T-cell (primary cell): ENCODE measurements at regions of chr3 and their contacts with region 1.

Region 1: GRCh38 chr3:133475245-133476010 is 75.6 kb downstream of the BFSP2 start:
- DNase-seq: no peak
- ATAC-seq: peak; percentile 34 to 66 (median 51)
- H3K4me3 ChIP-seq: no peak overlapping the region
- H3K4me3 Mint-ChIP-seq: peak overlapping the region in 1 of 3 donors; percentile 7
- H3K27ac ChIP-seq: peak overlapping the region; percentile 46
- H3K27ac Mint-ChIP-seq: peak overlapping the region; percentile 58 to 81
- H3K4me1 ChIP-seq: peaks cover 10% of the 10 kb centered on the region in 2 experiments
- H3K4me1 Mint-ChIP-seq: peaks cover 44 to 49% (median 47%) of the 10 kb centered on the region in 3 donors
- H3K27me3 ChIP-seq: peaks cover 0 to 2% of the 10 kb centered on the region in 2 experiments
- H3K27me3 Mint-ChIP-seq: no peaks in the 10 kb centered on the region

Region 2: DNA sequence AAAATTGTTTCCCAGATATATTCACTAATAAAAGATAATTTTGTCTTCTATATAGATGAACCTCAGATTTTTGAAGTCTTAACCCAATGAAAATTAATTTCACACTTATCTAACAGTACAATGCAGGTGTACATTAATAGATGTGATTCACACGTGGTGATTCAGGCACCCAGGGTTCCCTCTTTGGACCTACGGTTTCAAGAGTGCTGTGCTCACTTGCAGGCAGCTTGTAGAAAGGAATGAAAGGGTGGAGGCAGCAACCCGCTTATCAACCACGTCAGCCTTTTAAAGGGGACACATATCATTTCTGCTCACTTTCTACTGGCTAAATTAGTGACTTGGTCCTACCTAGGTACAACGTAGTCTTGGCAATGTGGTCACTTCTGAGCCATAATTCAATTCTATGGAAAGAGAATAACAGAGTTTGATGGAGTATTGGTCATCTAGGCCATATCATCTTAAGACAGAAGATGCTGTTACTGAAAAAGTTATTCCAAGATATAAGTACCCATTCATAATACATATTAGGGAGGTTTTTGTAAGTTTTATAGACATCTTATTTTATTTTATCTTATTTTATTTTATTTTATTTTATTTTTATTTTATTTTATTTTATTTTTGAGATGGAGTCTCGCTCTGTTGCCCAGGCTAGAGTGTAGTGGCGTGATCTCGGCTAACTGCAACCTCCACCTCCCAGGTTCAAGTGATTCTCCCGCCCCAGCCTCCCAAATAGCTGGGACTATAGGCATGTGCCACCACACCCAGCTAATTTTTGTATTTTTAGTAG is 1120.3 kb before region 1 on chr3:
- CTCF ChIA-PET with region 1: interaction called in 1 of 2 experiments, 12 read pairs
- POLR2A ChIA-PET with region 1: no interaction called
- DNase-seq: no peak
- ATAC-seq: no peak
- H3K4me3 ChIP-seq: no peak overlapping the region
- H3K4me3 Mint-ChIP-seq: no peak overlapping the region
- H3K27ac ChIP-seq: no peak overlapping the region
- H3K27ac Mint-ChIP-seq: no peak overlapping the region
- H3K4me1 ChIP-seq: no peaks in the 10 kb centered on the region
- H3K4me1 Mint-ChIP-seq: peaks cover 0 to 2% (median 0%) of the 10 kb centered on the region in 3 donors
- H3K27me3 ChIP-seq: no peaks in the 10 kb centered on the region
- H3K27me3 Mint-ChIP-seq: peaks cover 3 to 4% of the 10 kb centered on the region in 2 donors

Region 3: GRCh38 chr3:133171831-133172230 is 303.6 kb before region 1 on chr3:
- CTCF ChIA-PET with region 1: no interaction called
- POLR2A ChIA-PET with region 1: no interaction called
- DNase-seq: no peak
- ATAC-seq: no peak
- H3K4me3 ChIP-seq: no peak overlapping the region
- H3K4me3 Mint-ChIP-seq: no peak overlapping the region
- H3K27ac ChIP-seq: no peak overlapping the region
- H3K27ac Mint-ChIP-seq: no peak overlapping the region
- H3K4me1 ChIP-seq: no peaks in the 10 kb centered on the region
- H3K4me1 Mint-ChIP-seq: peaks cover 0 to 1% (median 0%) of the 10 kb centered on the region in 3 donors
- H3K27me3 ChIP-seq: no peaks in the 10 kb centered on the region
- H3K27me3 Mint-ChIP-seq: peaks cover 0 to 4% of the 10 kb centered on the region in 2 donors

Region 4: GRCh38 chr3:133540896-133541674 is 65.7 kb after region 1 on chr3:
- CTCF ChIA-PET with region 1: no interaction called
- POLR2A ChIA-PET with region 1: no interaction called
- DNase-seq: no peak
- ATAC-seq: peak in 1 of 4 experiments; percentile 19
- H3K4me3 ChIP-seq: no peak overlapping the region
- H3K4me3 Mint-ChIP-seq: no peak overlapping the region
- H3K27ac ChIP-seq: no peak overlapping the region
- H3K27ac Mint-ChIP-seq: no peak overlapping the region
- H3K4me1 ChIP-seq: no peaks in the 10 kb centered on the region
- H3K4me1 Mint-ChIP-seq: no peaks in the 10 kb centered on the region
- H3K27me3 ChIP-seq: no peaks in the 10 kb centered on the region
- H3K27me3 Mint-ChIP-seq: peaks cover 0 to 5% of the 10 kb centered on the region in 2 donors

Region 5: GRCh38 chr3:133561679-133562078 is 86.3 kb after region 1 on chr3:
- CTCF ChIA-PET with region 1: no interaction called
- POLR2A ChIA-PET with region 1: no interaction called
- DNase-seq: no peak
- ATAC-seq: no peak
- H3K4me3 ChIP-seq: no peak overlapping the region
- H3K4me3 Mint-ChIP-seq: no peak overlapping the region
- H3K27ac ChIP-seq: no peak overlapping the region
- H3K27ac Mint-ChIP-seq: no peak overlapping the region
- H3K4me1 ChIP-seq: no peaks in the 10 kb centered on the region
- H3K4me1 Mint-ChIP-seq: no peaks in the 10 kb centered on the region
- H3K27me3 ChIP-seq: no peaks in the 10 kb centered on the region
- H3K27me3 Mint-ChIP-seq: no peaks in the 10 kb centered on the region

Region 6: GRCh38 chr3:133611534-133611933 is 136.1 kb after region 1 on chr3:
- CTCF ChIA-PET with region 1: no interaction called
- POLR2A ChIA-PET with region 1: interaction called in 1 of 2 experiments, 20 read pairs
- DNase-seq: no peak
- ATAC-seq: no peak
- H3K4me3 ChIP-seq: no peak overlapping the region
- H3K4me3 Mint-ChIP-seq: no peak overlapping the region
- H3K27ac ChIP-seq: no peak overlapping the region
- H3K27ac Mint-ChIP-seq: no peak overlapping the region
- H3K4me1 ChIP-seq: no peaks in the 10 kb centered on the region
- H3K4me1 Mint-ChIP-seq: no peaks in the 10 kb centered on the region
- H3K27me3 ChIP-seq: no peaks in the 10 kb centered on the region
- H3K27me3 Mint-ChIP-seq: no peaks in the 10 kb centered on the region

Region 7: GRCh38 chr3:133776794-133777438 is 301.5 kb after region 1 on chr3:
- CTCF ChIA-PET with region 1: no interaction called
- POLR2A ChIA-PET with region 1: no interaction called
- DNase-seq: no peak
- ATAC-seq: no peak
- H3K4me3 ChIP-seq: no peak overlapping the region
- H3K4me3 Mint-ChIP-seq: no peak overlapping the region
- H3K27ac ChIP-seq: no peak overlapping the region
- H3K27ac Mint-ChIP-seq: no peak overlapping the region
- H3K4me1 ChIP-seq: no peaks in the 10 kb centered on the region
- H3K4me1 Mint-ChIP-seq: no peaks in the 10 kb centered on the region
- H3K27me3 ChIP-seq: peaks cover 0 to 14% of the 10 kb centered on the region in 2 experiments
- H3K27me3 Mint-ChIP-seq: peaks cover 26 to 34% of the 10 kb centered on the region in 2 donors